ENCODE measurements at regions of chr3 and their contacts with region 1.

Region 1: DNA sequence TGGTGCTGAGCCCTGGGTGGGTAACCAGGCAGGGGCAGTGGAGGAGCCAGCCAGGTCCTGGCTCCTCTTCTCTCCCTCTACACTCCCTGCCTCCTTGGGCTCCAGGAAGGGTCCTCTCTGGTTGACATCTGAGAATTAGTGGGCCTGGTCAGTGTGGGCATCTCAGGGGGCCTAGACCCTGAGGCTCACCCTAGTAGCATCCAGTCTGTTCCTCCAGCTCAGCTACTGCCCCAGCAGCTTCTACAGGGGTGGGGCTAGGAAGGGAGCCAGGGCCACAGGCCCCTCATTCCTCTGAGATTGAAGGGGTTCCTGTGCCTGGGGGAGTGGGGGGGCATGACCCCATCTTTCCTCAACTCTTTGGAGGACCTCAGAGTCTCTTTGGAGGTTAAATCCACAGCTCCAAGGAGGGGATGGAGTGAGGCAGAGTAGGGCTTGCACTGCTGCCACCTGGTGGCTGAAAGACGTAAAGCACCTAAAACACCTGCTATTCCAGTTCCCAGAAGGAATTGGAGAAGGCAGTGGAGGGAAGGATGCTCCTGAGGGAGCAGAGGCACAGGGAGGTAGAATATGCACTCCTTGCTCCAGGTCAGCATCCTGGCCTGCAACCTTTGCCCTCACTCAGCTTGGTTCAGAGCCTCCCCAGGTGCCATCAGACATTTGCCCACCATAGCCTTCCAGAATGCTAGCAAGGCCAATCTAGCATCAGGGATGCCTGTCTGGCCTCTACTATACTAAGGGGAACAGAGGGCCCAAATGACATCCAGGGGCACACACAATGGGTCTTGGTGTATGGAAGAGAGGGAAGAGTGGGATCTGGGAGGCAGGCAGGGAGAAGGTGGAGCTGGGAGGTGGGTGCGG is 25.1 kb downstream of the C3orf18 start:
- DNase-seq: peak; percentile 75
- ATAC-seq: peak; percentile 93
- H3K4me3 Mint-ChIP-seq: no peak overlapping the region
- H3K27ac Mint-ChIP-seq: no peak overlapping the region
- H3K4me1 Mint-ChIP-seq: no peaks in the 10 kb centered on the region
- H3K27me3 Mint-ChIP-seq: no peaks in the 10 kb centered on the region
- CTCF ChIP-seq: peak; percentile 90

Region 2: DNA sequence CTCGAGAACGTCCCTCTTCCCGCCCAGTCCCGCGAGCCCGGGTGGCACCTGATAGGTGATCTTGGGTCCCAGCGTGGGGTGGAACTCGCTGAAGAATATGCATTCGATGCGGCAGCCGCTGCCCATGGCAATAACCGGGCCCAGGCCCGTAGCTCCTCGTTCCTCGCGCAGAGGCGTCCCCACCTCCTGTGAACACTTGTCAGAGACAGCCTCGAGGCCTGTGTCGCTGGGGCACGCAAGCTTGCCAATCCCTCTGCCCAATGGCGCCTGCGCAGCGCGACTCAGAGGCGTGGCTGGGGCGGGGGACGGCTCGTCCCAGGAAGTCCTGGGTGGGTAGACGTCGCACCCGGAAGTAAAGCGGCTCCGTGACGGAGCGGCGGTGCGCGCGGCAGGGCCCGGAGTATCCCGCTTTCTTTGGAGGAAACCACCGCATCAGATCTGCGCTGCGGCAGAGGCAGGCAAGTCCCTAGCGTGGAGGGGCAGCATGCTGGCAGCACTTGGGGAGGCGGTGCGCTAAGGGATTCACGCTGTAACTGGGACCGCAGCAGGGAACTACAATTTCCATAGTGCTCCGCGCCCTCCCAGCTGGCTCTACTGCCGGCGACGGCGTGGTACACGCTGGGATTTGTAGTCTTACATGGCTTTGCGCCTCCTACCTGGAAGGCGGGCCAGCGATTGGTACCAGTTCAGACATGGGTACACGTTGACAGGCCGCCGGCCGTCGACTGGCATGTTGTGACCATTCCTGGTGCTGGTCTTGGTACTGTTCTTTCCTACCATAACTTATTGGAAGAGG is 191.7 kb before region 1 on chr3 and contains the starts of genes CYB561D2 and NPRL2:
- CTCF ChIA-PET with region 1: interaction called, 46 read pairs
- POLR2A ChIA-PET with region 1: interaction called, 5 read pairs
- intact Hi-C with region 1: no loop called
- DNase-seq: peak; percentile 98
- ATAC-seq: peak; percentile 89
- H3K4me3 Mint-ChIP-seq: peak within 1 kb of the TSS; percentile 91
- H3K27ac Mint-ChIP-seq: peak within 1 kb of the TSS; percentile 96
- H3K4me1 Mint-ChIP-seq: peaks cover 56% of the 10 kb centered on the region
- H3K27me3 Mint-ChIP-seq: no peaks in the 10 kb centered on the region
- CTCF ChIP-seq: no peak
- total RNA-seq, gene CYB561D2: 17.1 to 18.2 TPM
- total RNA-seq, gene NPRL2: 41.3 to 44.7 TPM

Region 3: DNA sequence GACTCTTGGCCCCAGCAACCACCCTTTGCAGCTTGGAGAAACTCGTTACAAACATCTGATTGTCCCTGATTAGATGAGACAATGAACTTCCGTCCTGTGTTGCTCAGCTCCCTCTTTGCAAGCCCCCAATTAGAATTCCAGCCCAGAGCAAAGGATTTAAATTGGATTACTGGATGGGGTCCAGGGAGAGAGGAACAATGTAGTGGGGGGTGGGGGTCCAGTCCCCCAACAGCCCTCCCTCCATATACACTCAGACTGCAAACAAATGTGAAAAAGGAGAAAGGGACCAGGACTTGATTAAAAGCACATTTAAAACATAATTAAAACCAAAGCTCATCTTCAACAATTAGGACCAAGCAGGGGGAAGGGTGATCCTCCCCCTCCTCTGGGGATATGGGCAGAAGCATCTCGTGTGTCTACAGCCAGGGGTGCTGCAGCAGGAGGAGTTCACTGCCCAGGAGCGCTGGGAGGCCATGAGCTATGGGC is 111.4 kb before region 1 on chr3:
- CTCF ChIA-PET with region 1: interaction called, 63 read pairs
- POLR2A ChIA-PET with region 1: no interaction called
- intact Hi-C with region 1: loop called (anchors 2 kb)
- DNase-seq: no peak
- ATAC-seq: no peak
- H3K4me3 Mint-ChIP-seq: no peak overlapping the region
- H3K27ac Mint-ChIP-seq: no peak overlapping the region
- H3K4me1 Mint-ChIP-seq: peaks cover 1% of the 10 kb centered on the region
- H3K27me3 Mint-ChIP-seq: no peaks in the 10 kb centered on the region
- CTCF ChIP-seq: no peak

Region 4: DNA sequence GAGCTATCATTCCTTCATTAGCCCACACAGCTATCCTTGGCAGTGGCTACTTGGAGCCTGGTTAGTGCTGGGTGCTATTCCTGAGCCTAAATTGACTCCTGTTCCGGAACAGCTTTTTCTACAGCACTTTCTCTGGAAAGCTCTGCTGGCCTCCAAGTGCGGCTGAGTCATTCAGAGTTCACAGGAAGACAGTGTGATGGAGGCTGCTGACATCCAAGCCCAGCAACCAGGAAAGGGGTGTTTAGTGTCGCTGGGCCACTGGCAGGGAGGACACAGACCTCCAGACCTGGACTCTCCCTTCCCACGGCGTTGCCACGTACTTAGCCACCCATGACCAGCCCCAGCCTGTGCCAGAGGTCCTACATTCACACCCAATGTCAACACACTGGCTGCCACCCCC is 67.7 kb before region 1 on chr3:
- CTCF ChIA-PET with region 1: interaction called, 12 read pairs
- POLR2A ChIA-PET with region 1: no interaction called
- intact Hi-C with region 1: no loop called
- DNase-seq: no peak
- ATAC-seq: no peak
- H3K4me3 Mint-ChIP-seq: no peak overlapping the region
- H3K27ac Mint-ChIP-seq: no peak overlapping the region
- H3K4me1 Mint-ChIP-seq: peaks cover 24% of the 10 kb centered on the region
- H3K27me3 Mint-ChIP-seq: no peaks in the 10 kb centered on the region
- CTCF ChIP-seq: no peak

Region 5: GRCh38 chr3:50509715-50510114 is 32.7 kb before region 1 on chr3:
- CTCF ChIA-PET with region 1: interaction called, 23 read pairs
- POLR2A ChIA-PET with region 1: no interaction called
- intact Hi-C with region 1: no loop called
- DNase-seq: no peak
- ATAC-seq: no peak
- H3K4me3 Mint-ChIP-seq: no peak overlapping the region
- H3K27ac Mint-ChIP-seq: no peak overlapping the region
- H3K4me1 Mint-ChIP-seq: no peaks in the 10 kb centered on the region
- H3K27me3 Mint-ChIP-seq: no peaks in the 10 kb centered on the region
- CTCF ChIP-seq: no peak

Region 6: GRCh38 chr3:50568947-50569749 is 26.7 kb after region 1 on chr3 and contains the start of gene HEMK1:
- CTCF ChIA-PET with region 1: interaction called, 31 read pairs
- POLR2A ChIA-PET with region 1: interaction called, 3 read pairs
- intact Hi-C with region 1: no loop called
- DNase-seq: peak; percentile 99
- ATAC-seq: peak; percentile 38
- H3K4me3 Mint-ChIP-seq: peak within 1 kb of the TSS; percentile 91
- H3K27ac Mint-ChIP-seq: peak within 1 kb of the TSS; percentile 98
- H3K4me1 Mint-ChIP-seq: peaks cover 47% of the 10 kb centered on the region
- H3K27me3 Mint-ChIP-seq: peaks cover 2% of the 10 kb centered on the region
- CTCF ChIP-seq: no peak
- total RNA-seq, gene HEMK1: 97.1 to 101 TPM

Measured in activated CD8-positive, alpha-beta T cell treated with anti-CD3 and anti-CD28 coated beads for 36 hours (primary cell).